ENCODE measurements at regions of chr12 and their contacts with region 1.

Region 1: GRCh38 chr12:6470375-6471163 is at the start of gene VAMP1:
- DNase-seq: peak; percentile 90 to 97 (median 95)
- ATAC-seq: peak; percentile 94
- H3K4me3 ChIP-seq: peak within 1 kb of the TSS; percentile 96
- H3K4me3 Mint-ChIP-seq: peak within 1 kb of the TSS; percentile 85 to 96 (median 92)
- H3K27ac ChIP-seq: peak within 1 kb of the TSS; percentile 75
- H3K27ac Mint-ChIP-seq: peak within 1 kb of the TSS; percentile 79 to 99 (median 95)
- H3K4me1 ChIP-seq: peaks cover 38 to 39% of the 10 kb centered on the region in 2 donors
- H3K4me1 Mint-ChIP-seq: peaks cover 26 to 59% (median 52%) of the 10 kb centered on the region in 7 donors
- H3K27me3 ChIP-seq: no peaks in the 10 kb centered on the region
- H3K27me3 Mint-ChIP-seq: peaks cover 0 to 5% (median 0%) of the 10 kb centered on the region in 5 donors
- total RNA-seq, gene VAMP1: 38.7 to 123 (median 47.9) TPM

Region 2: GRCh38 chr12:6307529-6307928 is 163.0 kb before region 1 on chr12:
- CTCF ChIA-PET with region 1: no interaction called
- POLR2A ChIA-PET with region 1: no interaction called
- intact Hi-C with region 1: no loop called
- DNase-seq: no peak
- ATAC-seq: peak; percentile 50
- H3K4me3 ChIP-seq: no peak overlapping the region
- H3K4me3 Mint-ChIP-seq: no peak overlapping the region
- H3K27ac ChIP-seq: no peak overlapping the region
- H3K27ac Mint-ChIP-seq: no peak overlapping the region
- H3K4me1 ChIP-seq: no peaks in the 10 kb centered on the region
- H3K4me1 Mint-ChIP-seq: peaks cover 0 to 4% (median 0%) of the 10 kb centered on the region in 7 donors
- H3K27me3 ChIP-seq: peaks cover 0 to 7% of the 10 kb centered on the region in 2 donors
- H3K27me3 Mint-ChIP-seq: peaks cover 6 to 47% (median 8%) of the 10 kb centered on the region in 5 donors

Region 3: DNA sequence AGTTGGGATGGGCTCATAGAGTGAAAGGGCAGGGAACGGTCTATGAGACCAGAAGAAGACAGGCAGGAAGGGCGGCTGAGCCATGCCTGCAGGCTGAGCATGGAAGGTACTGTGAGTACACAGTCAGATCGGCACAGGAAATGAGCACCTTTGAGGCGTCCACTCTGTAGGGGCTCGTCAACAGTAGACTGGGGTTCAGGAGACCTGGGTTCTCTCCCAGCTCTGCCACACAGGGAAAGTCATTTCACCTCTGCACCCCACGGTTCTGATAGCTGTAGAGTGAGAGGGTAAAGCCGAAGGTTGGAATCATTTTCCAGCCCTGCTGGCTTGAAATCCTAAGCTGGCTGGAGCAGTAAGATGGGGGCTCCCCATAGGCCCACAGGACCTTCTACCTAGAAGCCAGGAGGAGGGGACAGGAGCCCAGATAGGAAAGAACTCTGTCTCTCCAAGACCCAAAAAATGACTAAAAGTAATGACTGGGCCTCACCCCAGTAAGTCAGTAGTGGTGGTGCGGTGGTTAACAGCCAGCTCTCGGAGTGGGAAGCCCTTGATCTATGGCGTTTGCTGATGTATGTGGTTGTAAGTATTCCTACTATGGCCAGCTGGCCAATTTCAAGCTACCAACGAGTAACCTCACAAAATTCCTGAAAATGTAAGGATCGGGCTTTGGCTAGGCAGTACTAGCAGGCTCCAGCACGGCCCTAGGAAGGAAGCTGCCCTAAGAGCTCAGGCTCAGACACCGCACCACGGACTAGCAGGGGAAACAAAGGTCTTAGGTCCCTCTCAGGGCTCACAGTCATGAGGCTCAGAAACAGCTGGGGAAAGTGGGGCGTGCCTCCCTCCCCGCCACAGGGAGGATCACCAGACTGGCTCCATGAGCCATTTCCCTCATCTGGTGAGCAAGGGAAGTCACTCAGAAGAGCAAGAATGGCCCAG is 36.1 kb before region 1 on chr12:
- CTCF ChIA-PET with region 1: interaction called, 14 read pairs
- POLR2A ChIA-PET with region 1: interaction called, 726 read pairs
- intact Hi-C with region 1: no loop called
- DNase-seq: peak in 7 of 9 donors; percentile 41 to 60 (median 56)
- ATAC-seq: peak; percentile 80
- H3K4me3 ChIP-seq: peak overlapping the region; percentile 30
- H3K4me3 Mint-ChIP-seq: peak overlapping the region; percentile 55 to 85 (median 76)
- H3K27ac ChIP-seq: peak overlapping the region; percentile 68
- H3K27ac Mint-ChIP-seq: peak overlapping the region; percentile 90 to 98 (median 92)
- H3K4me1 ChIP-seq: peaks cover 18 to 30% of the 10 kb centered on the region in 2 donors
- H3K4me1 Mint-ChIP-seq: peaks cover 24 to 59% (median 53%) of the 10 kb centered on the region in 7 donors
- H3K27me3 ChIP-seq: no peaks in the 10 kb centered on the region
- H3K27me3 Mint-ChIP-seq: no peaks in the 10 kb centered on the region

Region 4: GRCh38 chr12:6451348-6452244 is 19.0 kb before region 1 on chr12 and contains the start of gene TAPBPL:
- CTCF ChIA-PET with region 1: interaction called, 21 read pairs
- POLR2A ChIA-PET with region 1: interaction called, 726 read pairs
- intact Hi-C with region 1: no loop called
- DNase-seq: peak; percentile 49 to 93 (median 87)
- ATAC-seq: peak; percentile 94
- H3K4me3 ChIP-seq: peak within 1 kb of the TSS; percentile 83
- H3K4me3 Mint-ChIP-seq: peak within 1 kb of the TSS; percentile 96 to 100 (median 98)
- H3K27ac ChIP-seq: peak within 1 kb of the TSS; percentile 96
- H3K27ac Mint-ChIP-seq: peak within 1 kb of the TSS; percentile 96 to 100 (median 99)
- H3K4me1 ChIP-seq: peaks cover 50% of the 10 kb centered on the region in 2 donors
- H3K4me1 Mint-ChIP-seq: peaks cover 50 to 84% (median 73%) of the 10 kb centered on the region in 7 donors
- H3K27me3 ChIP-seq: no peaks in the 10 kb centered on the region
- H3K27me3 Mint-ChIP-seq: no peaks in the 10 kb centered on the region
- total RNA-seq, gene TAPBPL: 23.0 to 65.4 (median 52.9) TPM

Region 5: GRCh38 chr12:6554168-6555017 is 83.8 kb after region 1 on chr12:
- CTCF ChIA-PET with region 1: interaction called, 7 read pairs
- POLR2A ChIA-PET with region 1: interaction called, 5 read pairs
- intact Hi-C with region 1: loop called in 1 of 2 experiments (anchors 1 kb)
- DNase-seq: peak; percentile 38 to 57 (median 52)
- ATAC-seq: peak; percentile 67
- H3K4me3 ChIP-seq: peak overlapping the region; percentile 92
- H3K4me3 Mint-ChIP-seq: peak overlapping the region; percentile 80 to 96 (median 90)
- H3K27ac ChIP-seq: peak overlapping the region; percentile 71
- H3K27ac Mint-ChIP-seq: peak overlapping the region; percentile 14 to 88 (median 55)
- H3K4me1 ChIP-seq: peaks cover 26 to 29% of the 10 kb centered on the region in 2 donors
- H3K4me1 Mint-ChIP-seq: peaks cover 39 to 62% (median 56%) of the 10 kb centered on the region in 7 donors
- H3K27me3 ChIP-seq: no peaks in the 10 kb centered on the region
- H3K27me3 Mint-ChIP-seq: no peaks in the 10 kb centered on the region

Region 6: GRCh38 chr12:6662906-6663742 is 192.6 kb after region 1 on chr12 and contains the start of gene ING4:
- CTCF ChIA-PET with region 1: no interaction called
- POLR2A ChIA-PET with region 1: no interaction called
- intact Hi-C with region 1: no loop called
- DNase-seq: peak; percentile 79 to 99 (median 98)
- ATAC-seq: peak; percentile 99
- H3K4me3 ChIP-seq: peak within 1 kb of the TSS; percentile 92
- H3K4me3 Mint-ChIP-seq: peak within 1 kb of the TSS; percentile 92 to 99 (median 96)
- H3K27ac ChIP-seq: peak within 1 kb of the TSS; percentile 80
- H3K27ac Mint-ChIP-seq: peak within 1 kb of the TSS; percentile 91 to 99 (median 96)
- H3K4me1 ChIP-seq: peaks cover 15 to 16% of the 10 kb centered on the region in 2 donors
- H3K4me1 Mint-ChIP-seq: peaks cover 18 to 47% (median 36%) of the 10 kb centered on the region in 7 donors
- H3K27me3 ChIP-seq: no peaks in the 10 kb centered on the region
- H3K27me3 Mint-ChIP-seq: peaks cover 0 to 2% (median 0%) of the 10 kb centered on the region in 5 donors
- total RNA-seq, gene ING4: 33.1 to 101 (median 39.6) TPM

Region 7: GRCh38 chr12:6839482-6840201 is 369.1 kb after region 1 on chr12:
- CTCF ChIA-PET with region 1: no interaction called
- POLR2A ChIA-PET with region 1: no interaction called
- intact Hi-C with region 1: no loop called
- DNase-seq: no peak
- ATAC-seq: no peak
- H3K4me3 ChIP-seq: no peak overlapping the region
- H3K4me3 Mint-ChIP-seq: no peak overlapping the region
- H3K27ac ChIP-seq: no peak overlapping the region
- H3K27ac Mint-ChIP-seq: no peak overlapping the region
- H3K4me1 ChIP-seq: peaks cover 0 to 4% of the 10 kb centered on the region in 2 donors
- H3K4me1 Mint-ChIP-seq: peaks cover 0 to 4% (median 0%) of the 10 kb centered on the region in 7 donors
- H3K27me3 ChIP-seq: no peaks in the 10 kb centered on the region
- H3K27me3 Mint-ChIP-seq: no peaks in the 10 kb centered on the region

Measured in naive thymus-derived CD4-positive, alpha-beta T cell (primary cell).